Pancreas (tissue), 10 donors: ENCODE measurements at regions of chr22 and their contacts with region 1.

Region 1: GRCh38 chr22:29202212-29203192 is 3.2 kb upstream of the EMID1 start:
- DNase-seq: peak in 1 of 6 donors; percentile 60
- ATAC-seq: peak in 3 of 4 donors; percentile 14 to 34 (median 20)
- H3K4me3 ChIP-seq: no peak overlapping the region
- H3K27ac ChIP-seq: peak overlapping the region in 1 of 4 donors; percentile 8
- H3K4me1 ChIP-seq: no peaks in the 10 kb centered on the region
- H3K27me3 ChIP-seq: no peaks in the 10 kb centered on the region
- CTCF ChIP-seq: no peak

Region 2: DNA sequence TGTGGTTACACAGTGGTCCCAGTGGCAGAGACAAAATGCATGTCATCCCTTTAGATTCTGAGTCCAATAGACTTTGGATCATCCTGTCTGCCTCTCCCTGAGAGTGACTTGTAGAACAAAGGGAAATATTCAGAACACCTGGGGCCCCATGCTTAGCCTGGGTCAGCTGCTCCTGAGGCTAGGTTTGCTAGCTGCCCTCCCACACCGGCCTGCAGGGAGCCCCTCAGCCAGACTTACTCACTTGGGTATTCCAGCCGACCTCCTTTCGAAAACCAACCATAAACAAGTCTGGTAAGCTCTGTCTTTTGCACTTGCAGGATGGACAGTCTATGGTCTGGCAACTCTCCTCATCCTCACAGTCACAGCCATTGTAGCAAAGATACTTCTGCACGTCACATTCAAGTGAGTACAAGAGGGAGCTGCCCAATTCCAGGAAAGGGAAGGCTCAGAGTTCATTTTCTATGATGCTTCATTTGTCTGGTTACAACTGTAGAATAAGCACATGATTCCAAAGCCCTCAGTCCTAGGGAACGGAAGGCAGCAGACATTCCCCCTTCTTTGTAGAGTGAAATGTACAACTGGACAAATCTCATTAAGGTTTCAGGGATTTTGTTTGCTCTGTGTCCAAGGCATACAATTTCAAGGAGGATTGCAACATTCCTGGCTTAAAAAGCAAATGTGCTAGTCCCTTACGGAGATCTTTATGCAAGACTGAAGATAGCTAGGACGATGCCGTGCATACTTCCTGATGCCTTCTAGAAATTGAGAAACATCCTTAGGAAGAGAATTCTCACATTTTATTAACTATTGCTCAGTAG is 62.3 kb before region 1 on chr22:
- intact Hi-C with region 1: no loop called
- DNase-seq: peak in 1 of 6 donors; percentile 9
- ATAC-seq: peak in 3 of 4 donors; percentile 49 to 72 (median 70)
- H3K4me3 ChIP-seq: no peak overlapping the region
- H3K27ac ChIP-seq: no peak overlapping the region
- H3K4me1 ChIP-seq: no peaks in the 10 kb centered on the region
- H3K27me3 ChIP-seq: no peaks in the 10 kb centered on the region
- CTCF ChIP-seq: no peak

Region 3: DNA sequence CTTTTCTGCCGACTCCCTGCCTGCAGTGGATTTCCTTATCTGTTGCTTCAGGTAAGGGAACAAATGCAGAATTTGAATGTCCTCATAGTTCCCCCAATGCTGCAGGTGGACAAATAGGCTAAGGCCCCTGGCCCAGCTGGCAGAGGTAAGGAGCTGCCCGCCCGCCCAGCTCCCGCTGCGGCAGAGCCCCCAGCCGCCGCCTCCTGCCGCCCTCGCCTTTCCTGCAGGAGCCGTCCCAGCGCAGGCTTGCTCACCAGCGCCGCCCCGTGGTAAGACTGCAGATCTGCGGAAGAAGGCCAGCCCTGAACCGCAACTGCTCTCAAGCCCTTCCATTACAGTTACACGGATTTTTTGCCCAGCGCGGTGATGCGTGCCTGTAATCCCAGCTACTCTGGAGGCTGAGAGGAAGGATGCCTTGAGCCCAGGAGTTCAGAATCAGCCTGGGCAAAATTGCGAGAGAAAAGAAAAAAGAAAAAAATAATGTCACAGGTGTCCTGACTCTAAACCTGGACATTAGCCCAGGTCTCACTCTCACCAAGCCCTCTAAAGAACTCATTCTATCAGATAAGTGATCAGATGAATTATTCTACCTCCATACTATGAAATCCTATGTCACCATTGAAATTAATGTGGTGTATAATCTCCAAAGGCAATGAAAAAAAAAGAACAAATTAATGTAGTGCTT is 48.0 kb before region 1 on chr22:
- intact Hi-C with region 1: no loop called
- DNase-seq: peak; percentile 57 to 97 (median 83)
- ATAC-seq: peak; percentile 92 to 98 (median 94)
- H3K4me3 ChIP-seq: peak overlapping the region in 2 of 4 donors; percentile 2 to 12
- H3K27ac ChIP-seq: no peak overlapping the region
- H3K4me1 ChIP-seq: peaks cover 0 to 5% (median 5%) of the 10 kb centered on the region in 3 donors
- H3K27me3 ChIP-seq: no peaks in the 10 kb centered on the region
- CTCF ChIP-seq: peak; percentile 87 to 98 (median 96)

Region 4: DNA sequence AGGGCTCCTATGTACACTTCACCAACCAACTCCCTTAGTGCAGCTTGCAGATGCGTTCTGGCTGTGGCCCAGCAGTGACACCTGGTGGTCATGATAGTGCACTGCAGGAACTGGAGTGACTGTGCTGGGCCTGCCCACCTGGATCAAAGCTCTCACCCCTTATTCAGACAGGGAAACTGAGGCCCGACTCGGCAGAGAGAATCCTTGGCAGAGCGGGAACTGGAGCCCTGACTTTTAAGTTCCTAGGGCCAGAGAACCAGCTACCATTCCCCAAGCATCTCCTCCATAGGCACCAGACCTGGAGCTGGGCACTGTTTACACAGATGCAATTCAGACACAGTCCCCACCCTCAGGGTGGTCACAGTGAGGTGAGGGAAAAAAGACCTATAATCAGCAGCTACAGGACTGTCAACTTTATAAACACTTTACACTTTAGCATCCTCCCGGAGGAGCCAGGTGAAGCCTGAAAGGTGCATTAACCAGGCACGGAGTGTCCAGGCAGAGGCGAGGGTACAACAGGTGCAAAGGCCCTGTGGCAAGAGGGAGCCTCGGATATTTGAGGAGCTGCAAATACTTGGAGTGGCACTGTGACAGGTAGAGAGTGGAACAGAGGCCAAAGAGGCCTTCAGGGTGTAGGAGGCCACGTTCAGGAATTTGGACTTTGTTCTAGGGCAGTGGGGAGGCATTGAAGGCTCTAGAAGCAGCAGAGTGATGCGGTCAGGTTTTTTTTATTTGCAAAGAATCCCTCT is 43.3 kb after region 1 on chr22:
- intact Hi-C with region 1: loop called in 2 of 3 experiments (anchors 5 kb)
- DNase-seq: peak; percentile 52 to 86 (median 74)
- ATAC-seq: peak; percentile 87 to 100 (median 96)
- H3K4me3 ChIP-seq: no peak overlapping the region
- H3K27ac ChIP-seq: no peak overlapping the region
- H3K4me1 ChIP-seq: no peaks in the 10 kb centered on the region
- H3K27me3 ChIP-seq: no peaks in the 10 kb centered on the region
- CTCF ChIP-seq: peak; percentile 89 to 96 (median 94)